Activated naive CD4-positive, alpha-beta T cell treated with anti-CD3 and anti-CD28 coated beads for 36 hours (primary cell): ENCODE measurements at regions of chr19 and their contacts with region 1.

Region 1: DNA sequence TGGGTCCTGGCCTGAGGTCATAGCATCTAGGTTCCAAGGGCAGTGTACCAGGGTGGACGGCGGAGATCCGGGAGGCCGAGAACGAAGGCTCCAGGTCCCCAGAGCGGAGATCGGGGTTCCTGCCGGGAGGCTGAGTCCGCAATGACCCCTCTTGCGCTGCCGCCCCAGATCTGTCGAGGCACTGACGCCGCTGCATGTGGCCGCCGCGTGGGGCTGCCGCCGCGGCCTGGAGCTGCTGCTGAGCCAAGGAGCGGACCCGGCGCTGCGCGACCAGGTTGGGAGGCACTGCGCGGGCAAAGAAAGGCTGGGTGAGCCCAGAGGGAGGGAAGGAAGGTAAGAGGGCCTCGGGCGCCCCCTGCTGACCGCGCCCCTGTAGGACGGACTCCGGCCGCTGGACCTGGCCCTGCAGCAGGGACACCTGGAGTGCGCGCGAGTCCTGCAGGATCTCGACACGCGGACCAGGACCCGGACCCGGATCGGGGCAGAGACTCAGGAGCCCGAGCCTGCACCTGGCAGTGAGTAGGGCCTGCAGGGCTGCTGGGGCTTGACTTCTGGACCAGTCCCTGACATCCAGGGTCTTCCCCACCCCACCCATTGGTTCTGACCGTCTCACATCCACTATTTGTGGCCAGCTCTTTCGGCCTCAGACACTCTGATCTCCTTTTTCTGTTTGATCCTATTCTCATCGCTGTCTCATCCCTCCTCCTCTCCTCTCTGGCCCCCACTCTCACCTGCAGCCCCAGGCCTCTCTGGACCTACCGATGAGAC is 971 bp downstream of the ANKLE1 start:
- DNase-seq: peak; percentile 87
- H3K4me3 Mint-ChIP-seq: peak overlapping the region; percentile 85
- H3K27ac Mint-ChIP-seq: no peak overlapping the region
- H3K4me1 Mint-ChIP-seq: peaks cover 13% of the 10 kb centered on the region
- H3K27me3 Mint-ChIP-seq: no peaks in the 10 kb centered on the region

Region 2: DNA sequence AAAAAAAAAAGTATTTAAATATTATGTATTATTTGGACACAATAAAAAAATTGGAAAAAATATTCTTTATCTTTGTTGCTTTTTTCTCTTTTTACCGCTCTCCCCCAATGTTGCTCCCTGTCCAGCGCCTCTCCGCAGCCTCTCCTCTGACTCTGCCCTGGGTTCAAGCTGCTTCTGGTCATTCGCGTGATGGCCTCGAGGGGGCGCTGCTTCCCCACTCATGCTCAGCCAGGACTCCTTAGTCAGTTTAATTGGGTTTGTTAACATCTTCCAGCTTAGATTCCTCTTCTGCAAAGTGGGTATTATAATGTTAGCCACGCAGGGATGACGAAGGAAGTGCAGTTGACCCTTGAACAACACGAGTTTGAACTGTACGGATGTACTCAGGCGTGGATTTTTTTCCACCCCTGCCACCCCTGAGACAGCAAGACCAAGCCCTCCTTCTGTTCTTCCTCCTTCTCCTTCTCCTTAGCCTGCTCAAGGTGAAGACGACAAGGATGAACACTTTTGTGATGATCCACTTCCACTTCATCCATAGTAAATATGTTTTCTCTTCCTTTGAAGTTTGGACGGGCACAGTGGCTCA is 567.9 kb before region 1 on chr19:
- CTCF ChIA-PET with region 1: no interaction called
- intact Hi-C with region 1: loop called (anchors 10 kb)
- DNase-seq: peak; percentile 71
- H3K4me3 Mint-ChIP-seq: no peak overlapping the region
- H3K27ac Mint-ChIP-seq: no peak overlapping the region
- H3K4me1 Mint-ChIP-seq: peaks cover 3% of the 10 kb centered on the region
- H3K27me3 Mint-ChIP-seq: peaks cover 3% of the 10 kb centered on the region

Region 3: DNA sequence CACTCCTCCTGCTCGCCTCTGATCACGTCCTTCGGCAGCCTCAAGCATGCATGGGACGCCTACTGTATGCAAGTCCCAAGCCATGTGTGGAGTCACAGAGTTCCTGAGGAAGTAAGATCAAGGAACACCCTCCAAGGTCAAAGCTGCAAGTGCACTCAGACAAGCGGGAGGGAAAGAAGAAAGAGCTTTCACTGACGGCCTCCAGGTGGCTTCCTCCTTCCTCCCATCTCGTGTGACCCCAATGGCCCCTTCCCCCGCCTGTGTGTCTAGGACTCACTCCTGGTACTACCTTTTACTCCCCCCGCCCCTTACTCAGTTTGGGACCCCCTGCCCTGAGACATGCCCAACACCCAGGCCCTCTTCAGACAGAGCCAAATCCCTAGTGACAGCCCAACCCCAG is 213.5 kb before region 1 on chr19:
- CTCF ChIA-PET with region 1: interaction called, 3 read pairs
- intact Hi-C with region 1: loop called (anchors 1 kb)
- DNase-seq: no peak
- H3K4me3 Mint-ChIP-seq: no peak overlapping the region
- H3K27ac Mint-ChIP-seq: no peak overlapping the region
- H3K4me1 Mint-ChIP-seq: peaks cover 46% of the 10 kb centered on the region
- H3K27me3 Mint-ChIP-seq: no peaks in the 10 kb centered on the region

Region 4: DNA sequence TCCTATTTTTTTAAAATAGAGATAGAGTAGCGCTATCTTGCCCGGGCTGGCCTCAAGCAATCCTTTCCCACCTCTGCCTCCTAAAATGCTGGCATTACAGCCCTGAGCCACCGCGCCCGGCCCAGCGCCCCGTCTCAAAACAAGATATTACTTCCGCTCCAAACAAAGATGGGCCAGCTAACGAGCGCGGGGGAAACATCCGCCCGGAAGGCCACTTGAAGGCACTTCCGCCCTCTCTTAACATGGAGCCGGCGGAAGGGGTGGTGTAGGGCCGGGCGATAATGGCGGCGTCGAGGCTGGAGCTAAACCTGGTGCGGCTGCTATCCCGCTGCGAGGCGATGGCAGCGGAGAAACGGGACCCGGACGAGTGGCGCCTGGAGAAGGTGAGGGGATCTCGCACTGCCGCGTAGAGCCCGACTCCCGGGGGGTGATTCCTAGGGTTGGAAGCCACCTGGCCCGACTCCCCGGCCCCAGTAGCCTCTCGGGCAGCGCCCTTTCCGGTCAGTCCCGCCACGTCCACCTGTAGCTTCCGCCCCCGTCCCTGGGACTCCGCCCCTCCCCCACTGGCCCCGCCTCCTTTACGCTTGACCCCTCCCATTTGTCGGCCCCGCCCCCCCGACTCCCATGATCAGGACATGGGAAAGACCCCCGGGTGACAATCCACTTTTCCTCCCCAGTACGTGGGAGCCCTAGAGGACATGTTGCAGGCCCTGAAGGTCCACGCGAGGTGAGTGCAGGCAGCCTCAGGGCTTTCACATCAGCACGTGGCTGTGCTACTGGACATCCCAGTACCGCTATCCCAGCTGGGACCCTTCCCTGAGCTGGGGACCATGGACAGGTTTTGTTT is 67.3 kb before region 1 on chr19 and contains the start of gene USE1:
- CTCF ChIA-PET with region 1: interaction called, 3 read pairs
- intact Hi-C with region 1: loop called (anchors 5 kb)
- DNase-seq: peak; percentile 93
- H3K4me3 Mint-ChIP-seq: peak within 1 kb of the TSS; percentile 85
- H3K27ac Mint-ChIP-seq: peak within 1 kb of the TSS; percentile 97
- H3K4me1 Mint-ChIP-seq: peaks cover 10% of the 10 kb centered on the region
- H3K27me3 Mint-ChIP-seq: no peaks in the 10 kb centered on the region
- total RNA-seq, gene USE1: 24.7 to 25.3 TPM

Region 5: GRCh38 chr19:17260842-17261325 is 21.8 kb before region 1 on chr19:
- CTCF ChIA-PET with region 1: interaction called, 59 read pairs
- intact Hi-C with region 1: loop called (anchors 1 kb)
- DNase-seq: peak; percentile 95
- H3K4me3 Mint-ChIP-seq: no peak overlapping the region
- H3K27ac Mint-ChIP-seq: no peak overlapping the region
- H3K4me1 Mint-ChIP-seq: peaks cover 10% of the 10 kb centered on the region
- H3K27me3 Mint-ChIP-seq: no peaks in the 10 kb centered on the region